H1 (cell line): ENCODE measurements at regions of chr1 and their contacts with region 1.

Region 1: DNA sequence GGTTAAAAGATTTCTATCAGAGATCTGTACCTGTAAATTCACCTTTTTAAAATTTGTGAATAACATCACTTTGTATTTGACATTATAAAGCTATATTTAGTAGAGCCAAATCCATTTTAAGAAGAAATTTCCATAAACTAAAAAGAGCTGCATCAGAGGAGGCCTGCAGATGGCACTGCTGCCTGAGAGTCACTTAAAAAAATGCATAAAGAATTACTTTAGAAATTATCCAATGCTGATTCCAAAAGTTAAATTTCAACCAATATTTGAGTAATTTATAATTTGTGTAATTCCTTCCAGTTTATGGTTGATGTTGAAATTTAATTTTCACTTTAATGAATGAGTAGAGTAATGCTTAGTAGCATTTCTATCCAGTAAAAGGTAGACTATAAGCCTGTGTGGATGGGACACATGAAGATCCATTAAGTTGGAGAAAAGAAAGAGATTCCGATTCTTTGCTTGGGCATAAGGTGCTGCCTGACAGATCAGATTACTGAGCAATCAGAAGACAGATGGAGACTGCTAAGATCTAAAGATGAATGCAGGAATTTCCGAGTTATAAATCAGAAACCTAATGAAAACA is 20.7 kb upstream of the RPE65 start:
- DNase-seq: no peak
- H3K4me3 ChIP-seq: no peak overlapping the region
- H3K27ac ChIP-seq: no peak overlapping the region
- H3K4me1 ChIP-seq: peaks cover 0 to 4% (median 0%) of the 10 kb centered on the region in 4 experiments; a peak in 2 of 7 replicates
- H3K27me3 ChIP-seq: no peaks in the 10 kb centered on the region
- CTCF ChIP-seq: peak in 1 of 3 experiments; percentile 20; a peak in 2 of 4 replicates
- EP300 ChIP-seq: no peak
- POLR2A ChIP-seq: no peak
- RAD21 ChIP-seq: peak; percentile 51 to 54

Region 2: DNA sequence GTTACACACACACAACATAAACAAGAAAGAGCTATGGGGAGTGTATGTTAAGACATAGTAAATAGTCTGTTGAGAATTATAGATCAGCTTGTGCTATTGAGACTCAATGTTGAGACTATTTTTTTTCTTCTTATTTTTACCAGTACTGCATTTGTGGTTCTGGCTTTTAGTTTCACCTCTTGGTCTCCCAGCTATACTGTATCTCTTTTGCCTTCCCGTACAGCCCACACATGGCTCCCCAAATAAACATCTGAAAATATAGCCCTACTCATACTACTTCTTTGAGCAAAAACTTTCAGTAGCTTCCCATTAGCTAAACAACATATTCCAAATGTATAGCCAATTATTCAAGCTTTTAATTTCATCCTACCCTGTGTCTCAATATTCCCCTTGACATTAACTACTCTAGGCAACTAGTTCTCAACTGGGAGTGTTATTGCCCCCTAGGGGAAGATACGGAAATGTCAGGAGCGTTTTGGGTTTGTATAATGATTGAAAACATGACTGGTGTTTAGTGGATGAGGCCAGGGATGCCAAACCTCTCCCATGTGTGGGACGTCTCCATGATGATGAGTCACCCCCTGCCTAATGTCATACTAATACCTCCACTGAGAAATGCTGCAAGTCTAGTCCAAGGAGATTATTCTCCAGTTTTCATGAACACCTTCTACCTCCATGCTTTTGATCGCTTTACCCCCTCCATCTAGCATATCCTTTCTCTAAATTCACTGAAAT is 27.5 kb before region 1 on chr1:
- CTCF ChIA-PET with region 1: interaction called, 19 read pairs
- POLR2A ChIA-PET with region 1: no interaction called
- DNase-seq: peak in 1 of 2 experiments; percentile 61
- H3K4me3 ChIP-seq: no peak overlapping the region
- H3K27ac ChIP-seq: no peak overlapping the region
- H3K4me1 ChIP-seq: peaks cover 0 to 2% (median 0%) of the 10 kb centered on the region in 4 experiments; a peak in 2 of 7 replicates
- H3K27me3 ChIP-seq: no peaks in the 10 kb centered on the region
- CTCF ChIP-seq: peak in 2 of 3 experiments; percentile 54 to 72; a peak in 2 of 4 replicates
- EP300 ChIP-seq: no peak
- POLR2A ChIP-seq: no peak
- RAD21 ChIP-seq: peak; percentile 56 to 68

Region 3: DNA sequence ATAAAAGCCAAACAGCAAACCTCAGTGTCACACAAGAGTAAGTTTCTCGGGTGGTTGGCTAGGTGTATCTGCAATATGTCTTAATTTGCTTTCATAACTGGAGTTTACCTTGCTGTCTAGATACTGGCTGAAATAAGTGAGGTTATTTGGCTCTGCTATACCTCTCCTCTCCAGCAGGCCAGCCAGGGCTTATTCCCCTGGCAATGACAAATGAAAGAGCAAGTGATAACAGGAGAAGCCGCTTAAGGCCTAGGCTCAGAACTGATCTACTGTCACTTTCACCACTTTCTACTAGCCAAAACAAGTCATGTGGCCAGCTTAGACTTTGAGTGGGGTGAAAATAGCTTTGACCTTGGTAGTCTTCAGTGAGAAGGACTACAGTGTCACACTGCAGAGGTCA is 15.9 kb before region 1 on chr1:
- CTCF ChIA-PET with region 1: interaction called, 13 read pairs
- POLR2A ChIA-PET with region 1: no interaction called
- DNase-seq: no peak
- H3K4me3 ChIP-seq: no peak overlapping the region
- H3K27ac ChIP-seq: no peak overlapping the region
- H3K4me1 ChIP-seq: peaks cover 0 to 2% (median 0%) of the 10 kb centered on the region in 4 experiments; a peak in 1 of 7 replicates
- H3K27me3 ChIP-seq: no peaks in the 10 kb centered on the region
- CTCF ChIP-seq: peak in 1 of 3 experiments; percentile 49; a peak in 1 of 4 replicates
- EP300 ChIP-seq: no peak
- POLR2A ChIP-seq: no peak
- RAD21 ChIP-seq: peak in 1 of 2 experiments; percentile 20; a peak in 1 of 4 replicates

Region 4: DNA sequence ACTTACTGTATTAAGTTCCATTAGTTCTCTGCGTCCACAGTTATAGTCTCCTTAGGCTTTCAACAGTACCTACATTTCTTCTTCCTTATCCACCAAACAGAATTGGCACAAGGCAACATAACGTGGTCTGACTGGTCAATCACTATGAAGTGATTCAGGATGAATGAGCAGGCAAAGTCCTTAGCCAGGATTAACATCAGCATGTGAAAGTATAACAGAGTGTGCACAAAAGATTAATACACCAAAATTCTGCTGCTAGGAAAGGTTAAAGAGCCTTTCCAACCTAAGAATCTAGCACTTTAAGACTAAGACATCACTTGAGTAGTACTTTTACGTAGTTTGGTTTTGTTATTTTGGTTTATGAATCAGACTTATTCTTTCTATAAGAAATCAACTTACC is 10.6 kb after region 1 on chr1:
- CTCF ChIA-PET with region 1: interaction called, 16 read pairs
- POLR2A ChIA-PET with region 1: no interaction called
- DNase-seq: no peak
- H3K4me3 ChIP-seq: no peak overlapping the region
- H3K27ac ChIP-seq: no peak overlapping the region
- H3K4me1 ChIP-seq: no peaks in the 10 kb centered on the region
- H3K27me3 ChIP-seq: no peaks in the 10 kb centered on the region
- CTCF ChIP-seq: no peak
- EP300 ChIP-seq: no peak
- POLR2A ChIP-seq: no peak
- RAD21 ChIP-seq: no peak

Region 5: GRCh38 chr1:68506386-68506785 is 35.9 kb after region 1 on chr1:
- CTCF ChIA-PET with region 1: no interaction called
- POLR2A ChIA-PET with region 1: no interaction called
- DNase-seq: no peak
- H3K4me3 ChIP-seq: no peak overlapping the region
- H3K27ac ChIP-seq: no peak overlapping the region
- H3K4me1 ChIP-seq: no peaks in the 10 kb centered on the region
- H3K27me3 ChIP-seq: no peaks in the 10 kb centered on the region
- CTCF ChIP-seq: no peak
- EP300 ChIP-seq: no peak
- POLR2A ChIP-seq: no peak
- RAD21 ChIP-seq: no peak

Region 6: DNA sequence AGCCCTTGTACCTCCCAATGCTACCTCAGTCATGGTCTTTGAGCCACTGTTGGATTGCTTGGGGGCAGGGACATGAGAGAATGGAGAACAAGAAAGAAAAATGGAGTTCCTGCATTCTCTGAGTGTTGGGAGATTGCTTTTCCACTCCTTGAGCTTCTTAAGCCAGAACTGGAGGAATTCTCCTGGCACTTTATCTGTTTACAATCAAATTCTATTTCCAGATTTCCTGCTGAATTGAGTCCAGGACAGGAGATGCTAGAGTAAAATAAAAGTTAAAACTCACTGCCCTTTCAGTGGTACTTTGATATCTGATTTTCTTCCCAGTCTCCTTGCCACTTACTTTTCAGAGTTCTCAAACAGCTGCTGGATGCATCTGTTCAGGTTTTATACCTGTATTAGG is 50.8 kb after region 1 on chr1:
- CTCF ChIA-PET with region 1: no interaction called
- POLR2A ChIA-PET with region 1: no interaction called
- DNase-seq: no peak
- H3K4me3 ChIP-seq: no peak overlapping the region
- H3K27ac ChIP-seq: no peak overlapping the region
- H3K4me1 ChIP-seq: no peaks in the 10 kb centered on the region
- H3K27me3 ChIP-seq: no peaks in the 10 kb centered on the region
- CTCF ChIP-seq: no peak
- EP300 ChIP-seq: no peak
- POLR2A ChIP-seq: no peak
- RAD21 ChIP-seq: no peak